Left colon (tissue), 2 donors: ENCODE measurements at regions of chr15 and their contacts with region 1.

Region 1: DNA sequence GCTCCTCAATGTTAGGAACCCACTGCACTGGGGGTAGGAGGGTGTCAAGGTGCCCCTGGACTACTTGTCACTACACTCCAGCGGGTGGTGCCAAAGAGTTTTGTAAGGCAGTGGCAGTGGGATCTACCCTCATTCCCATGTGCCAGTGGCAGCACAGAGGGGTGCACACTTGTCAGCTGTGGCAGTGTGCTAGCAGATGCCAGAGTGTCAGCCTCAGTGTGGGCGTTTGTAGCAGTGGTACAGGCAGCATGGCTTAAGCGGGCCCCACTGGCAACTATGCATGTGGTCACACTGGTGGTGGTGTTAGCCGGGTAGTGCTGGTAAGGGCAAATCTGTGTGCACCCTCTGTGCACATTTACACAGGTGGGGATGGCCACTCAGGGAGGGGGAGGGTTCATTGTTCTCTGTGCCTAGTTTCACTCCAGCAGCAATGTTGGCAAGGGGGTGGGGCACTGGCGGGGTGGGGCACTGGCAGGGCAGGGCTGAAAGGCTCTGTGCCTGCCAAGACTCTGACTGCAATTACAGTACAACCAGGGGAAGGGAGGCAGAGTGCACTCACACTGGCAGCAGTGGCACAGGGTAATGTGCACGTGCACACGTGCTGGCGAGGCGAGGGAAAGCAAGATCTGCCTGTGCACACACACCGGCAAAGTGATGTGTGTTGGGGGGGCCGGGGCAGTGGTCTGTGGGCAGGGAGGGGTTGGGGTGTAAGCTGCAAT is 31.8 kb downstream of the MYO9A start:
- DNase-seq: peak; percentile 52 to 57
- ATAC-seq: peak; percentile 99

Region 2: GRCh38 chr15:71916834-71917233 is 169.3 kb before region 1 on chr15:
- intact Hi-C with region 1: no loop called
- DNase-seq: no peak
- ATAC-seq: no peak

Region 3: DNA sequence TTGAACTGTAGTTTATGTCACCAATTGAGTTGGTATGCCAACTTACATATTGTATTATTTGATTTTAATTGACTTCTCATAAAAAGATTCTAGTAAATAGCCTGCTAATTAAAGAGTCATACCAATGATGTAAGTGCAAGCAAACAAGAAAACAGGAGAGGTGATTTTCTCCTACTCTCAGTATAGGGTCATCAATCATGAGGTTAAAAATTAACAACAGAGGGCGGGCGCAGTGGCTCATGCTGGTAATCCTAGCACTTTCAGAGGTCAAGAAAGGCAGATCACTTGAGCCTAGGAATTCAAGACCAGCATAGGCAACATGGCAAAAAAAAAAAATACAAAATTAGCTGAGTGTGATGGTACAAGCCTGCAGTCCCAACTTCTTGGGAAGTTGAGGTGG is 76.9 kb before region 1 on chr15:
- intact Hi-C with region 1: no loop called
- DNase-seq: peak in 1 of 2 donors; percentile 21
- ATAC-seq: peak; percentile 84

Region 4: DNA sequence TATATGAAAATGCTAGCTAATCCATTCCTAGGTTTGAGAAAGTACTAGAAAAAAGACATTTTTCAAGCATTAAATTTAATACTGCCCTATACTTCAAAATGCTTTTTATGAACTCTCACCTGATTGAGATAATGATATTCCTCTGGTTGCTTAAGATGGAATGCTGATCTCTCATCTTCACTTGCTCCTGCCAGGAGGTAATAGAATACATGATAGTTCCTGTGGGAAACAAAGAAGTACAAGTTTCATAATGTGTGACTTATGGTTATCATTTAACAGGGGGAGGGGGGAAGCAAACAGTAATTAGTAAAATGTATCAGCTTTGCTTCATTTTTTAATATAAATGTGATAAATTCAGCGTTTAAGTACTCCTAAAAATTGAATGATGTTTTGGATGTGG is 65.3 kb before region 1 on chr15:
- intact Hi-C with region 1: loop called in 1 of 2 experiments (anchors 10 kb)
- DNase-seq: no peak
- ATAC-seq: no peak

Region 5: DNA sequence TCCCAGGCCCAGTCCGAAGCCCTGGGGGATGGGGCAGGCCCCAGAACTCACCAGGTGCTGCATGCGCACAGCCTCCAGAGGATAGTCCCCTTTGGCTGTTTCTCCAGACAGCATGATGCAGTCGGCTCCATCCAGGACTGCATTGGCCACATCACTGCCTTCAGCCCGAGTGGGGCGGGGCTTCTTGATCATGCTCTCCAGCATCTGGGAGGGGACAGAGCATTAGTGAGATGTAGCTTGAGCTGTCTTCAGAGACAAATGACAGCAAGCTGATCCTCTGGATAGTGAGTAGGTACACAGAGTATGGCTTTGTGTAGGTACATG is 120.5 kb after region 1 on chr15:
- intact Hi-C with region 1: no loop called
- DNase-seq: no peak
- ATAC-seq: no peak

Region 6: DNA sequence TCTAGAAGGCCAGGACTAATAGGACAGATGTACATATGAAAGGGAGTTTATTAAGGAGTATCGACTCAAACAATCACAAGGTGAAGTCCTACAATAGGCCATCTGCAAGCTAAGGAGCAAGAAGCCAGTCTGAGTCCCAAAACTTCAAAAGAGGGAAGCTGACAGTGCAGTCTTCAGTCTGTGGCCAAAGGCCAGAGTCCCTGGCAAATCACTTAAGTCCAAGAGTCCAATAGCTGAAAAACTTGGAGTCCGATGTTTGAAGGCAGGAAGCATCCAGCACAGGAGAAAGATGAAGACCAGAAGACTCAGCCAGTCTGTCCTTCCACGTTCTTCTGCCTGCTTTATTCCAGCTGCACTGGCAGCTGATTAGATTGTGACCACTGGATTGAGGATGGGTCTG is 244.9 kb after region 1 on chr15:
- intact Hi-C with region 1: no loop called
- DNase-seq: no peak
- ATAC-seq: no peak